ENCODE measurements at regions of chr7 and their contacts with region 1.

Region 1: GRCh38 chr7:36152756-36153570 is at the start of gene EEPD1:
- DNase-seq: peak; percentile 100
- ATAC-seq: peak; percentile 98
- H3K4me3 ChIP-seq: peak within 1 kb of the TSS; percentile 79 to 90
- H3K27ac ChIP-seq: peak within 1 kb of the TSS; percentile 3 to 80
- H3K4me1 ChIP-seq: peaks cover 0 to 4% of the 10 kb centered on the region in 2 donors
- H3K27me3 ChIP-seq: no peaks in the 10 kb centered on the region
- total RNA-seq, gene EEPD1: 14.4 to 15.4 TPM

Region 2: DNA sequence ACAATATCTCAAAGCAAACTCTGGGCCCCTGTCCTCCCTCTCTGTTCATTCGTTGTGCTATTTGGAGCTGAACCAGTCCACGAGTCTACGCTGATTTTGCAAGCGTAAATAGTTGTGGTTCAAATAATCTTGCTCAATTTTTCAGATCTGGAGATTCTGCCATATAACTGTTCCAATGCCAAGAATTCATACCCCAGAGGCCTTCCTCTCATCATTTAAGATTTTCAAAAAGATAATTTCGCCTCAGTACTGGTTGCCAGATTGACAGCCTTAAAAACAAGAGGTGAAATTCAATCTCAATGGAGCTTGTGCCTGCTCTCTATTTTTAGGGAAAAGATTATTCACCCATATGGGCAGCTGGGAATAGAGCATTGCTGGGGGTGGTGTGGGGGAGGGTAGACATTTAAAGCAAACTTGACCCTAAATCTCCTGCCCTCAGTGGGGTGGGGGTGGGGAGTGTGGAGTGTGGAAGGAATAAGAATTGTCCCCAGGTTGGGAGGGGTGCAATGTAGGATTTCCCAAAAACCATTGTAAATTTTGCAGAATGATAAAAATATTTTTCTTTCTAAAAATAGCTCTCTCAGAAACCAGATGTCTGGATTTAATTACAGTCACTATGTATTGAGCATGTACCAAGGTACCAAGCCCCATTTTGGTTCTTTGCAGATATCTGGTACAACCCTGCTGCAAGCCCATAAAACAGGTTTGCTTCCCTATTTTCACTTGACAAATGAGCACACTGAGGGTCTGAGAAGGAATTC is 104.6 kb before region 1 on chr7:
- intact Hi-C with region 1: loop called in 1 of 2 experiments (anchors 2 kb)
- DNase-seq: no peak
- ATAC-seq: peak; percentile 77
- H3K4me3 ChIP-seq: no peak overlapping the region
- H3K27ac ChIP-seq: peak overlapping the region in 1 of 2 donors; percentile 19
- H3K4me1 ChIP-seq: peaks cover 10 to 15% of the 10 kb centered on the region in 2 donors
- H3K27me3 ChIP-seq: no peaks in the 10 kb centered on the region

Region 3: DNA sequence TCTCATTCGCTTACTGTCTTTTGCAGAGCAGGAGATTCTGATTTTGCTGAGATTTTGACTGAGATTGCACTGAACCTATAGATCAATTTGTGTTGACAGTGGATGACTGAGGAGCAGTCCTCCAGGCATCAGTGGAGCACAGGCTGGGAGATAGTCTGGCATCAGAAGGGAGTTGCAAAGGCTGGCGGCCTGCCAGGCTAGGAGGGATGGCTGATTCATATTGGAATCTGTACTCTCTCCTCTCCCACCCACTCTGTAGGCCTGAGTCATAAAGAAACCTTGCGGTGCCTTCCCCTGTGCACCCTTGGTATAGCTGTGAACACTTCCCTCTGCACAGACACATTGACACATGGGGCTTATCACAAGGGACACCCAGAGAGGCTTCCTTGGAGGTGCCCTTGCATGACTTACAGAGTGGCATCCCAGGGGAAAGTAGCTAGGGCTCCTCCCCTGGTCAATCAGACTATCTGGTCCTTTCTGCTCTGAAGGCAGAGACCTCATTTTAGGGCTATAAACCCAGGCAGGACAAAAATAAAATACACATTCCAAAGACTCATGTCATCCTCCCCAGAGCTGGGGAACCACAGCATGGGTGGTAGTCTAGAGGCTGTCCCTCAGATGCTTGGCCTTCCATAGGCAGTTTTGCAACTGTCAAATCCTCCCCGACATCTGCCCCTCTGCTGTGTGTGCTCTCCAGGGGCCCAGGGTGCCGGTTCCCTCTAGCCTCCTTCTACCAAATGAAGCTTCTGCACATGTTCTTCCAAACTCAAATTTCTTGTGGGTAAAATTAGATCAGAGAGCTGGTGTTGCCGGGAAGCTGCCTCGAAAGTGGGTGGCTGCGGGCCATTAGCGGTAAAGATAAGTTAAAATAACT is 37.3 kb before region 1 on chr7:
- intact Hi-C with region 1: loop called in 1 of 2 experiments (anchors 2 kb)
- DNase-seq: peak; percentile 91 to 96
- ATAC-seq: peak; percentile 61
- H3K4me3 ChIP-seq: no peak overlapping the region
- H3K27ac ChIP-seq: peak overlapping the region; percentile 61 to 100
- H3K4me1 ChIP-seq: peaks cover 5 to 9% of the 10 kb centered on the region in 2 donors
- H3K27me3 ChIP-seq: no peaks in the 10 kb centered on the region

Region 4: DNA sequence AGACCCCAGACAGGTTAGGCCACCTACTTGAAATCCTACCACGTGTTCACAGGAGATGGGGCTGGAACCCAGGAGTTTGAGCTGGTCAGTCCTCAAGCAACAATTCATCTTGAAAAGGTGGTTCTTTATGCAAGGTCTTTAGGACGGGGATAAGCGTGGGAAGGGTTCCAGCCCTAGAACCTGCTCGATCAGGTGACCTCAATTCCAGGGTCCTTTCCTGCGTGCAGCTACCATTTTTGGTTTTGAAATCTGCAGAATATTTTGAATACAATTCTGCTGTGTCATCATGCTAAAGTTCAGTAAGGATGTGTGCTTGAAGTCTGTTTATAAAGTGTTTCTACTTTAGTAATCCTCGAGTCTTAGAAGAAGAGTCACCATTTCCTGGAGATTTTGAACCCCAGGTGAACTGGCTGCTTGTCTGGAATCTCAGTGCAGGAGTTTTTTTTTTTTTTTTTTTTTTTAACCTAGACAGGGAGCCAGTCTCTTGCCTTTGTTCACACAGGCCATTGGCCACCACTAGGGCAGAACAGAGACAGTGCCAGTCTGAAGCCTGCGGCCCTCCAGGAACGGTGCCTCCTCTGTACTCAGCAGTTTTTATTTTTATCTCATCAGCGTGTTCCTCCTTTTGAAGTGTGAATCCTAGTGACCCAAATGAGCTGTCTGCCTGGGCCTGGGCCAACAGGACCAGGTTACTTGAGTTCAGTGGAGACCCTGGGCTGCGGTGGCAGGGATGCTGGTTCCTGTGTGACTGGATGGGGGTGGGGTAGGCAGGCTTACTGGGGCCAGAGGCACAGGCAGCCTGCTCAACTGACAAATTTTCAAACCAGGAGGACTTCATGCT is 54.7 kb after region 1 on chr7:
- intact Hi-C with region 1: loop called in 1 of 2 experiments (anchors 5 kb)
- DNase-seq: peak; percentile 79 to 84
- ATAC-seq: peak; percentile 72
- H3K4me3 ChIP-seq: no peak overlapping the region
- H3K27ac ChIP-seq: peak overlapping the region in 1 of 2 donors; percentile 64
- H3K4me1 ChIP-seq: peaks cover 2 to 13% of the 10 kb centered on the region in 2 donors
- H3K27me3 ChIP-seq: no peaks in the 10 kb centered on the region

Region 5: GRCh38 chr7:36291387-36292316 is 138.7 kb after region 1 on chr7:
- intact Hi-C with region 1: loop called in 1 of 2 experiments (anchors 1 kb)
- DNase-seq: peak; percentile 89 to 96
- ATAC-seq: peak; percentile 95
- H3K4me3 ChIP-seq: peak overlapping the region in 1 of 2 donors; percentile 16
- H3K27ac ChIP-seq: peak overlapping the region; percentile 84 to 87
- H3K4me1 ChIP-seq: no peaks in the 10 kb centered on the region
- H3K27me3 ChIP-seq: no peaks in the 10 kb centered on the region

Measured in aorta (tissue), 5 donors.